ENCODE measurements at regions of chr16 and their contacts with region 1.

Region 1: GRCh38 chr16:78906135-78906534 is 694.4 kb downstream of the MAF start:
- DNase-seq: no peak
- H3K27ac ChIP-seq: no peak overlapping the region
- CTCF ChIP-seq: no peak

Region 2: DNA sequence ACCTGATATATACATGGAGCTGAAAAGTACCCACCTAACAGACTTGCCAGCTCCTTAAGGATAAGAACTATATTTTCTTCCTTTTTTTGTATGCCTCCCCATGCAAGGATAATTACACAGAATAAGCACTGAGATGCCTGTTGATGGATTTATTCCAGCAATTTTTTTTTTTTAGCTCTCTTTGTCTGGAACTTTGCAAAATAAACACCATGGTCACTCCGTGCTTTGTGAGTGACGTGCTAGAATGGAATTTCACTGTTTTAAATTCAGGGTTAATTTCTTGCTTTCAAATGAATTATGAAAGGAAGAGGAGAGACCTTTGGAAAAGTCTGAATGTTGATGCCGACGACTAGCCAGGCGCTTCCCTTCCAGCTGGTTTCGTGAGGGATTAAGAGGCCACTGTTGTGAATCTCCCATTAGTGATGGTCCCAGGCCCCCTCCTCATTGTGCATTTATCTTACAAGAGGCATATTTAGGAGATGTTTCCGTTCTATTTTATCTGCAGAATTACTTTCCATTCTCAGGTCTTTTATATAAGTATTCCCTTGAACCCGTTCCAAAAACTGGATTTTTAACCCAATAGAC is 277.6 kb before region 1 on chr16:
- CTCF ChIA-PET with region 1: interaction called, 10 read pairs
- POLR2A ChIA-PET with region 1: no interaction called
- DNase-seq: no peak
- H3K27ac ChIP-seq: no peak overlapping the region
- CTCF ChIP-seq: no peak

Measured in RWPE1 (cell line).